Ovary (tissue), 10 donors: ENCODE measurements at regions of chr1 and their contacts with region 1.

Region 1: DNA sequence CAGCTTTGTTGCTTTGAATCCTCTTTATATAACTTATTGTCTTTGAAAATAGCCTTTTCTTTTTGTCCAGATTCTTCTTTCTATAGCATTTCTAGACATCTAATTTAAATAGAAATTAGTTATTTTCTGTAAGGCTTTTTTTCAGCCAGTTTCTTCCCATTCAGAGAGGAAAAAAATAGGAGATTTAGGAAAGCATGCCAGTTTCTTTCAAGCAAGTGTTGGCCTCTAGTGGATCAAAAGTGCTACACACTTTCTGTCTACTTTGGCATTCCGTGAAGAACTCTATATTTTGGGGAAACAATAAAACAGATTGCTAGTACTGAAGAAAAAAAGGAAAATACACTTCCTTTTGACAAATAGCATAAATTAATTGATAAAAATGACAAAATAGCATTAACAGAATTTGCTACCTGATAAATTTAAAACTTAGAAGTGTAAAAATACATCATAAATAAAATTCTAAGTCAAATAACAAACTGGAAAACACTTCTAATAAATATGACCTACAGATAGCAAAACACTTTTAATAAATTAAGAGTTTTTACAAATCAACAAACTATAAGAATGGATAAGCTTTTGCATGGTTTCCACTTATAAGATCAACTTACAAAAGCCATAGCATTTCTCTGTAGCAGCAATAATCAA is 13.1 kb upstream of the EXO1 start:
- DNase-seq: no peak
- H3K4me3 ChIP-seq: no peak overlapping the region
- H3K27ac ChIP-seq: no peak overlapping the region
- H3K4me1 ChIP-seq: no peaks in the 10 kb centered on the region
- H3K27me3 ChIP-seq: no peaks in the 10 kb centered on the region
- CTCF ChIP-seq: peak; percentile 31 to 51 (median 36)
- EP300 ChIP-seq: no peak
- POLR2A ChIP-seq: no peak

Region 2: GRCh38 chr1:241611063-241611462 is 223.8 kb before region 1 on chr1:
- intact Hi-C with region 1: loop called (anchors 5 kb)
- DNase-seq: no peak
- H3K4me3 ChIP-seq: no peak overlapping the region
- H3K27ac ChIP-seq: no peak overlapping the region
- H3K4me1 ChIP-seq: peaks cover 3% of the 10 kb centered on the region
- H3K27me3 ChIP-seq: no peaks in the 10 kb centered on the region
- CTCF ChIP-seq: peak; percentile 44 to 73 (median 71)
- EP300 ChIP-seq: no peak
- POLR2A ChIP-seq: no peak

Region 3: GRCh38 chr1:241947354-241947753 is 112.5 kb after region 1 on chr1:
- intact Hi-C with region 1: no loop called
- DNase-seq: no peak
- H3K4me3 ChIP-seq: no peak overlapping the region
- H3K27ac ChIP-seq: no peak overlapping the region
- H3K4me1 ChIP-seq: no peaks in the 10 kb centered on the region
- H3K27me3 ChIP-seq: no peaks in the 10 kb centered on the region
- CTCF ChIP-seq: no peak
- EP300 ChIP-seq: no peak
- POLR2A ChIP-seq: no peak